RWPE1 (cell line): ENCODE measurements at regions of chr4 and their contacts with region 1.

Region 1: DNA sequence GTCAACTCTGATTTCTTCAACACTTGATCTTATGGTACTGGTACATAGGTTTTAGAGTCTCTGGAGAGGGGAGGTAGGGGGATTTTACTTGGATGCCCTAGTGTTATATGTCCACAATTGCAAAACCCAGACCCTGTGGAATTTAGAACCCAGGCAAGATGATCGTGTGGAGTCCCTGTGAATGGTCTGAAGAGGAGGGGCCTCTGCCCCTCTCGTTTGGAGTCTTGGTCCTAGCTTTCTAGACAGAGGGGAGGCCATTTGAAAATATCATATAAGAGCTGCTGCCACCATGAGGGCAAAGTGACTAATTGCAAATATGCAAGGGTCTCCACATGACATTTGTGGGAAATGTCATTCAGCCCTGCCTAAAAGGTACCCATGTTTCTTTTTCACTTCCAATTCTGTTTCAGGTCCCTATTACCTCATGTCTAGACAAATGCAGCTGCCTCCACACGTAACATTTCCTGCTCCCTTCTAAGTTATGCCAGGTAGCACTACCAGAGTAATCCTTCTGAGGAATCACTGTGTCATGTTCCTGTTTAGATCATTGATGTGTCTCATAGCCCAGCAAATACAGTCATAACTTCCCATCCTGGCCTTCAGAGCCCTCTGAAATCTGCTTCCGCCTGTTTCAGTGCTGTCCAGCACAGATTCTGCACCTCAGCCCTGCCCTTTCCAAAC is 126.8 kb downstream of the KLHL8 start:
- DNase-seq: peak; percentile 69
- H3K27ac ChIP-seq: peak overlapping the region; percentile 83
- CTCF ChIP-seq: peak; percentile 45

Region 2: DNA sequence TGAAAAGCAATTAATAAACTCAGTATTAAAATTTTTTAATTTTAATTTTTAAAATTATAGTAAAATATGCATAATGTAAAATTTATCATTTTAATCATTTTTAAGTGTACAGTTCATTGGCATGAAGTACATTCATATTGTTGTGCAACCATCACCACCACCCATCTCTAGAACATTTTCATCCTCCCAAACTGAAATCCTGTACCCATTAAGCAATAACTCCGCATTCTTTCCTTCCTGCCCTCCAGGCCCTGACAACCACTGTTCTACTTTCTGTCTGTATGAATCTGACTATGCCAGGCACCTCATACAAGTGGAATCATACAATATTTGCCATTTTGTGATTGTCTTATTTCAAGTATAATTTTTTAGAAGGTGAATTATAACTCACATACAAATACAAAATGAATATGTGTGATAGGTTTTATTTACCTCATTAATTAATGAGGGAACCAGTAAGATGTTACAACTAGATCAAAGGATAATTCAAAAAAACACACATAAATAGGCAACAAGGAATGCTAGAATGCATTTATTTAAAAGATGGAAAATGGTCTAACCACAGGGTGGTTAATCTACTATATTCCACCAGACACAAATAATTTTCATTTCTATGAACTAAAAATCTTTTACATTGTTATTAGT is 171.9 kb before region 1 on chr4:
- CTCF ChIA-PET with region 1: interaction called, 11 read pairs
- POLR2A ChIA-PET with region 1: no interaction called
- DNase-seq: no peak
- H3K27ac ChIP-seq: no peak overlapping the region
- CTCF ChIP-seq: no peak

Region 3: GRCh38 chr4:87406462-87406861 is 312.9 kb after region 1 on chr4:
- CTCF ChIA-PET with region 1: no interaction called
- POLR2A ChIA-PET with region 1: no interaction called
- DNase-seq: no peak
- H3K27ac ChIP-seq: no peak overlapping the region
- CTCF ChIP-seq: no peak